ENCODE measurements at regions of chr11 and their contacts with region 1.

Region 1: DNA sequence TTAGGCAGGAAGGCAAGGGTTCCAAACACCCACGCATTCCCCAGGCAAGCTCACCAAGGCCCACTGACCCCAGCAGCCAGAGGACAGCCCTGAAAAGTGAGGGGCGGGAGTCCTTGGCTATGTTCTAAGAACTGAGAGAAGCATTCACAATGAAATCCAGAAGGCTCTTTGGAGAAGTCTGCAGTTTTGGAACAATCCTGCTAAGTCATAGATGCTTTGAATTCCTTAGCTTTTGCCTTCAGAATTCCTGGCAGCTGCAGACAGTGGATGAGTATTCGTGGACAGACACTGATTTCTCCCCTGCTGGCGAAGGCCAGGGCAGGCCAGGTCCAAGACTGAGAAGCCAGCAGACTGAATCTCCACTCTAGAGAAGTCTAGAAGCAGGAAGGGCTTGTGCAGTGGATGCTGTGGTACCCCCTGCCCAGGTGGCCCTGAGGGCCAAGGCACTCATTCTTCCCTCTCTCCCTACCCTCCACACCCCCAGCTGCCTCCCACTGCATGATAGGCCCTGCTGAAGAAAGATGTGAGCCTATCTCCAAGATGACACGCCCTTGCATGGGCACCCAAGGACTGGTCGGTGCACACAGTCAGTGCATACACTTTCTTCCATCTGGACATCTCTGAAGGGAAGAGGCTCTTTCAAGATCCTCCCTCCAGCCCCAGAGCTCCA is 133.2 kb upstream of the TEAD1 start:
- DNase-seq: peak; percentile 94
- ATAC-seq: peak; percentile 71
- H3K4me3 ChIP-seq: no peak overlapping the region
- H3K27ac ChIP-seq: peak overlapping the region; percentile 95
- H3K4me1 ChIP-seq: peaks cover 45% of the 10 kb centered on the region
- H3K27me3 ChIP-seq: no peaks in the 10 kb centered on the region
- CTCF ChIP-seq: peak; percentile 42
- POLR2A ChIP-seq: no peak; the same call in 1 of the 2 replicates
- RAD21 ChIP-seq: peak; percentile 49

Region 2: DNA sequence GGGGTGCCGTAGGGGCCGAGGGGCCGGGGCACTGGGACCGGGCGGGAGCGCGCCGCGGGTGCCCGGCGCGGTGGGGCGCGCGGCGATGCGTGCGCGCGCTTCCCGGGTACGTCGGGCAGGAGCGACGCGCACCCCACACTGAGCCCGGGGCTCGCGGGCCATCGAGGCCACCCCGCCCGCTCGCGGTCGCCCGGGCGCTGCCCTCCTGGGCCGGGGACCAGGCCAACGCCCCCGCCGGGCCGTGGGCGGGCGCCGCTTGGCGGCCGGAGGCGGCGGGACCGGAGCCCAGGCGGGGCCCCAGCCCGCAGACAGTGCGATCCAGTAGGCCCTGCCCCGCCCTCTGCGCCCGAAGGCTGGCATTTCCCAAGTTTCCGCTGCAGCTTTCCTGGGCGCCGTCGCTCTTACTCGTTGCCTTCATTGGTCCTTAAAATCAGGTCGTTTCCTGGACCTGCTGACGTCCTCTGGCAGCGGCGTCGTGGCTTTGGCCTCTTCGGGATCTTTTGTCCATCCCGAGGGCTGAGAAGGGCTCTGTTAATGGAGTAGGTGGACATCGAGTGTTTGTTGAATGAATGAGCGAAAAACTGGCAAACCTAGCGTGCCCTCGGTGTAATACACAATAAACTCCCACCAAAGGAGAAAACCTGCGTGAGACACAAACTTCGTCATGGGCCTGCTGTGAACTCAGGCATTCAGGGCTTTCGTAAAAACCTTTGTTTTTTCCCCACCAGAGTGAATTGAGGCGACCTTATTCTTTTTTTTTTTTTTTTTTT is 163.0 kb before region 1 on chr11:
- CTCF ChIA-PET with region 1: no interaction called
- POLR2A ChIA-PET with region 1: no interaction called
- dilution Hi-C with region 1: no loop called
- in situ Hi-C with region 1: no loop called
- intact Hi-C with region 1: loop called (anchors 2 kb)
- DNase-seq: peak; percentile 71
- ATAC-seq: peak; percentile 73
- H3K4me3 ChIP-seq: peak overlapping the region; percentile 96
- H3K27ac ChIP-seq: peak overlapping the region; percentile 100
- H3K4me1 ChIP-seq: peaks cover 15% of the 10 kb centered on the region
- H3K27me3 ChIP-seq: no peaks in the 10 kb centered on the region
- CTCF ChIP-seq: peak; percentile 36
- POLR2A ChIP-seq: peak; percentile 82
- RAD21 ChIP-seq: 0 out of 2 replicates have a peak, but pooled peaks have one; percentile 15

Region 3: GRCh38 chr11:12893787-12894672 is 353.0 kb after region 1 on chr11:
- CTCF ChIA-PET with region 1: no interaction called
- POLR2A ChIA-PET with region 1: no interaction called
- dilution Hi-C with region 1: no loop called
- in situ Hi-C with region 1: no loop called
- intact Hi-C with region 1: loop called (anchors 5 kb)
- DNase-seq: peak; percentile 52
- ATAC-seq: peak; percentile 68
- H3K4me3 ChIP-seq: no peak overlapping the region
- H3K27ac ChIP-seq: peak overlapping the region; percentile 56
- H3K4me1 ChIP-seq: peaks cover 25% of the 10 kb centered on the region
- H3K27me3 ChIP-seq: no peaks in the 10 kb centered on the region
- CTCF ChIP-seq: peak; percentile 83
- POLR2A ChIP-seq: no peak
- RAD21 ChIP-seq: peak; percentile 69

Region 4: DNA sequence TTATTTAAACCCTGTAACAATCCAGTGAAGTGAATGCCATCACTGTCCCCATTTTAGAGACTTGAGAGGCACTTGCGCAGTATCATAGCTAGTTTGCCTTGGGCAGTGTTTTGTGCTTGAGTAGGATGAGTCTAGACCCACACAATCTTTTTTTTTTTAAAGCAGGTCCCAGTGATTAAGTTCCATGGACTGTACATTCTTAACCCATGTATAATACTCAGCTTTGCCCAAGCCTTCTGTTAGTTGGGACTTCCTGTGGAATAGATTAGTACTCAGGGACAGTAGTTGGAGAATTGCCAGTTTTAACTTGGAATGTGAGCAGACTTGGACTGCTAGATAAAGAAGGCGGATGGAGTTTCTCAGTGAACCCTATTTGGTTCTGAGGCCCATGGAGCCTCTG is 359.4 kb after region 1 on chr11:
- CTCF ChIA-PET with region 1: no interaction called
- POLR2A ChIA-PET with region 1: no interaction called
- dilution Hi-C with region 1: no loop called
- in situ Hi-C with region 1: loop called (anchors 10 kb)
- intact Hi-C with region 1: no loop called
- DNase-seq: peak; percentile 94
- ATAC-seq: peak; percentile 84
- H3K4me3 ChIP-seq: no peak overlapping the region
- H3K27ac ChIP-seq: no peak overlapping the region
- H3K4me1 ChIP-seq: peaks cover 22% of the 10 kb centered on the region
- H3K27me3 ChIP-seq: no peaks in the 10 kb centered on the region
- CTCF ChIP-seq: no peak
- POLR2A ChIP-seq: no peak
- RAD21 ChIP-seq: no peak